Activated CD8-positive, alpha-beta T cell treated with anti-CD3 and anti-CD28 coated beads for 36 hours (primary cell): ENCODE measurements at regions of chr12 and their contacts with region 1.

Region 1: DNA sequence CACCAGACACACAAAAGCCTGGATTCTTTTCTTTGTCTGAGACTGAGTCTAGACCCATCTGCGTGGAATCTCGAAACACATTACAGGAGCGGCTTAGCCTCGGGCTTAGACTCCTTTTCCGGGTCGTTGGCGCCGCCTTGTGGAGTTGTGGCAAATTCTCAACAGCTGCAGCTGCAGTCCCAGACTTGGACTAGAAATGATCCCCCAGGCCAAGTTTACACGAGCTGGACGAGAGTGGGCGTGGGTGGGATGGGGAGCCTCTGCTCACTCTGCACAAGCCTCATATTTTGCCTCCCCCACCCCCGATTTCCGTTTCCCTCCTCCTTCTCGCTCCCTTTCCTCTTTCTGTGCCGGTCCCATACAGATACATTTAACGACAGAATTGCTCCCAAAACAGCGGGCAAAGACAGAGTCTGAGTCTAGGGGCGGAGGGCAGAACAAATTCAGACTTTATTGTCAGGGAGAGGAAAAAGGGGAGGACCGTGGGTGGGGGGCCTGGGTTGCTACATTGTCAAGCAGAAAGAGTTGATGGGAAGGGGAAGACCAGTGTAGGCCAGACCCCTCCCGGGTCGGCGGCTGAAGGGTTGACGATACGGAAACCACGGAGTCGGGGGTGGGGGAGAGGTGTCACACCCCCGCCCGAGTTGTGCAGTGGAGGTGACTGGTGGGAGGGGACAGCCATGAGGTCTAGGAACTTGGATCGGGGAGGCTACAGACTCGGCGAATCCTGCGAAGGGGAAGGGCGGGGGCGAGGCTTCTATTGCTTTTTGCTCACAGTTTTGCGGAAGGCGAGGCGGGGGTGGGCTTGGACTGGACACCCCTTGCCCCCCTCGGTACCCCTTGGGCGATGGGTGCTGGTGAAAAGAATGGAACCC is 4.7 kb upstream of the GPR84 start:
- DNase-seq: peak; percentile 93
- ATAC-seq: peak; percentile 76
- H3K4me3 Mint-ChIP-seq: peak overlapping the region; percentile 7
- H3K27ac Mint-ChIP-seq: no peak overlapping the region
- H3K4me1 Mint-ChIP-seq: peaks cover 45% of the 10 kb centered on the region
- H3K27me3 Mint-ChIP-seq: peaks cover 3% of the 10 kb centered on the region
- CTCF ChIP-seq: peak; percentile 80

Region 2: DNA sequence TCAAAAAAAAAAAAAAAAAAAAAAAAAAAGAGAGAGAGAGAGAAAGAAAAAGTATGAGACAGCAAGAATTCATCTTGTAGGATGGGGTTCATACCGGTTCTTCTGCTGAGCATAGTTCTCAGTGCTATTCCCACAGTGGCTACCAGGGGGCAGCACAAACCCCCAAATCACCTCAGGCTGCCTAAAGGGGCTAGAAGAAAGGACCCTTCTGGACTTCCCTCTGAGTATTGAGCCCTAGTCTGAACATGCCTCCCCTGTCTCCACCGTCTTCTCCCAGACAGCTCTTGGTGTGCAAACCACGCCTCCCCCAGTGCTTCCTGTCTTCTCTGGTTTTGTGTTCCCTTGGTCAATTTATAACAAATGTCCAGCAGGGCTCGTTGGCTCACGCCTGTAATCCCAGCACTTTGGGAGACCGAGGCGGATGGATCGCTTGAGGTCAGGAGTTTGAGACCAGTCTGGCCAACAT is 148.8 kb before region 1 on chr12:
- CTCF ChIA-PET with region 1: interaction called, 14 read pairs
- POLR2A ChIA-PET with region 1: no interaction called
- intact Hi-C with region 1: no loop called
- DNase-seq: peak; percentile 87
- ATAC-seq: peak; percentile 65
- H3K4me3 Mint-ChIP-seq: no peak overlapping the region
- H3K27ac Mint-ChIP-seq: no peak overlapping the region
- H3K4me1 Mint-ChIP-seq: peaks cover 20% of the 10 kb centered on the region
- H3K27me3 Mint-ChIP-seq: peaks cover 16% of the 10 kb centered on the region
- CTCF ChIP-seq: peak; percentile 76

Region 3: DNA sequence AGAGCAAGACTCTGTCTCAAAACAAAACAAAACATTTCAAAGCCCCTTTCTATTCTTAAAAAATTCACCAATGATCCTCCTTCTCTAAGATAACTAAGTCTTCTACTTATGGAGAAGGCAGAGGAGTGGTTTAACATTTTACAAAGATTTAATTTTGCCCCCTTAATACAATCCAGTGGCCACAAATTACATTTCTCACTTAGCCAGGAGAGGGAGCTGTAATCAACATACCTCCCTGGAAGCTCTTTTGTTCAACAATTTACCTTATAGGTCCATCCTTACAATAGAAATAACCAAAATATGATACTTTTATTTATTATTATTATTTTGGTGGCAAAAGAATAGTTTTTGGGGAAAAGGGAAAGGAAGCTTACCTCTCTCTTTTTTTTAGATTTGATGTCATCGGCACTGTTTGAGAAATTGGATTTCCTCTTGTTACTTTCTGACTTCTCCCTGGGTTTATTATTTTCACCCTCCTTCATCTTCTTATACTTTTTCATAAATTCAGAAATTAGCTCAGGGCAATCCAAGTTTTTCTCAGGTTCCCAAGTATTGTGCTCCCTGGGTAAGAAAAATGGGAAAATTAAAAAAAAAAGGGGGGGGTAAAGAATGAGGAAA is 117.2 kb before region 1 on chr12:
- CTCF ChIA-PET with region 1: interaction called, 14 read pairs
- POLR2A ChIA-PET with region 1: no interaction called
- intact Hi-C with region 1: no loop called
- DNase-seq: peak; percentile 22
- ATAC-seq: peak; percentile 62
- H3K4me3 Mint-ChIP-seq: no peak overlapping the region
- H3K27ac Mint-ChIP-seq: no peak overlapping the region
- H3K4me1 Mint-ChIP-seq: peaks cover 11% of the 10 kb centered on the region
- H3K27me3 Mint-ChIP-seq: no peaks in the 10 kb centered on the region
- CTCF ChIP-seq: peak; percentile 49

Region 4: GRCh38 chr12:54294152-54294952 is 74.6 kb before region 1 on chr12:
- CTCF ChIA-PET with region 1: interaction called, 117 read pairs
- POLR2A ChIA-PET with region 1: interaction called, 4 read pairs
- intact Hi-C with region 1: loop called (anchors 5 kb)
- DNase-seq: peak; percentile 77
- ATAC-seq: peak; percentile 88
- H3K4me3 Mint-ChIP-seq: no peak overlapping the region
- H3K27ac Mint-ChIP-seq: no peak overlapping the region
- H3K4me1 Mint-ChIP-seq: peaks cover 4% of the 10 kb centered on the region
- H3K27me3 Mint-ChIP-seq: peaks cover 13% of the 10 kb centered on the region
- CTCF ChIP-seq: peak; percentile 79

Region 5: GRCh38 chr12:54324617-54325441 is 44.1 kb before region 1 on chr12 and contains the start of gene COPZ1:
- CTCF ChIA-PET with region 1: interaction called, 10 read pairs
- POLR2A ChIA-PET with region 1: no interaction called
- intact Hi-C with region 1: loop called (anchors 5 kb)
- DNase-seq: peak; percentile 98
- ATAC-seq: peak; percentile 99
- H3K4me3 Mint-ChIP-seq: peak within 1 kb of the TSS; percentile 98
- H3K27ac Mint-ChIP-seq: peak within 1 kb of the TSS; percentile 94
- H3K4me1 Mint-ChIP-seq: peaks cover 28% of the 10 kb centered on the region
- H3K27me3 Mint-ChIP-seq: no peaks in the 10 kb centered on the region
- CTCF ChIP-seq: peak; percentile 65
- total RNA-seq, gene COPZ1: 75.8 to 78.4 TPM

Region 6: GRCh38 chr12:54385241-54385914 is 16.4 kb after region 1 on chr12:
- CTCF ChIA-PET with region 1: interaction called, 68 read pairs
- POLR2A ChIA-PET with region 1: no interaction called
- intact Hi-C with region 1: no loop called
- DNase-seq: no peak
- ATAC-seq: no peak
- H3K4me3 Mint-ChIP-seq: no peak overlapping the region
- H3K27ac Mint-ChIP-seq: no peak overlapping the region
- H3K4me1 Mint-ChIP-seq: peaks cover 12% of the 10 kb centered on the region
- H3K27me3 Mint-ChIP-seq: no peaks in the 10 kb centered on the region
- CTCF ChIP-seq: no peak

Region 7: GRCh38 chr12:54658306-54659264 is 289.6 kb after region 1 on chr12:
- CTCF ChIA-PET with region 1: no interaction called
- POLR2A ChIA-PET with region 1: no interaction called
- intact Hi-C with region 1: no loop called
- DNase-seq: peak; percentile 71
- ATAC-seq: peak; percentile 82
- H3K4me3 Mint-ChIP-seq: no peak overlapping the region
- H3K27ac Mint-ChIP-seq: no peak overlapping the region
- H3K4me1 Mint-ChIP-seq: no peaks in the 10 kb centered on the region
- H3K27me3 Mint-ChIP-seq: peaks cover 11% of the 10 kb centered on the region
- CTCF ChIP-seq: peak; percentile 53